ENCODE measurements at regions of chr12 and their contacts with region 1.

Region 1: GRCh38 chr12:121060149-121061001 is 21.3 kb upstream of the OASL start:
- DNase-seq: peak; percentile 80 to 91 (median 89)
- H3K4me3 ChIP-seq: peak overlapping the region; percentile 25 to 88 (median 67)
- H3K27ac ChIP-seq: peak overlapping the region; percentile 79 to 88
- H3K4me1 ChIP-seq: peaks cover 0 to 10% (median 6%) of the 10 kb centered on the region in 4 experiments
- H3K27me3 ChIP-seq: no peaks in the 10 kb centered on the region

Region 2: GRCh38 chr12:120580787-120581723 is 479.3 kb before region 1 on chr12 and contains the start of gene POP5:
- CTCF ChIA-PET with region 1: interaction called, 14 read pairs
- POLR2A ChIA-PET with region 1: no interaction called
- DNase-seq: peak; percentile 96 to 97 (median 97)
- H3K4me3 ChIP-seq: peak within 1 kb of the TSS; percentile 76 to 96 (median 91)
- H3K27ac ChIP-seq: peak within 1 kb of the TSS; percentile 60 to 78
- H3K4me1 ChIP-seq: peaks cover 8 to 34% (median 21%) of the 10 kb centered on the region in 4 experiments
- H3K27me3 ChIP-seq: peaks cover 0 to 23% (median 9%) of the 10 kb centered on the region in 5 experiments

Region 3: GRCh38 chr12:121079736-121080272 is 19.4 kb after region 1 on chr12:
- CTCF ChIA-PET with region 1: interaction called, 19 read pairs
- POLR2A ChIA-PET with region 1: no interaction called
- DNase-seq: no peak
- H3K4me3 ChIP-seq: no peak overlapping the region
- H3K27ac ChIP-seq: no peak overlapping the region
- H3K4me1 ChIP-seq: no peaks in the 10 kb centered on the region
- H3K27me3 ChIP-seq: no peaks in the 10 kb centered on the region

Region 4: DNA sequence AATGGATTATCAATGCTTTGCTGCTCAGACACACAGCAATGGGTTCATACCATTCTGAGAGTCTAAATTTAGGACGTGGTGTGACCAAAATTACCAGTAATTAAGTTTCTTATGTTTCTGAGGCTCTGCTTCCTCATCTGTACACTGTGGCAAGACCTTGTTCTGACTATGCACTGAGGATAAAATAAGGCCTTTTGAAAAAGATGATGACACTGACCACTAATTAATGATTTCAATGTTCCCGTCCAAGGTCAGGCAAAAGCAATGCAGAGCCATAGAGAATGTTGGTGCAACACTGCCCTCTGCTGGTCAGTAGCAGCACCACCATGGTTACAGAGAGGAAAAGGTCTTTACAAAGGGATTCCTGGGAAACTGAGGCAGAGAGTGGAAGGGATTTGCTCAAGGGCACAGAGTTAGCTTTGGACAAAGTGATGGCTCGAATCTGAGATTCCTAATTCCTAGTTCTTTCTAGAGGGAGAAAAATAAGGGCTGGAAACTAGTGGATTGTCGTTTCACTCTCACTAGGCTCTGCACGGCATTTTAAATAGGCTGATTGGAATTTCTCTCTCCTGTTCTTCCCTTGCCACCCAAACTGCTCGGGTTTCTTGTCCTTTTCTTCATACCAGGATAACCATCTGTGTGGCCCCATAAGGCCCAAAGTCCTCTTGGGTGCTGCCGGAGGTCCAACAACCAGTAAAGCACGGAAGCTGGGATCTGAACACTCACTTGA is 50.0 kb after region 1 on chr12:
- CTCF ChIA-PET with region 1: interaction called, 64 read pairs
- POLR2A ChIA-PET with region 1: no interaction called
- DNase-seq: peak; percentile 63 to 76 (median 70)
- H3K4me3 ChIP-seq: no peak overlapping the region
- H3K27ac ChIP-seq: no peak overlapping the region
- H3K4me1 ChIP-seq: peaks cover 0 to 15% (median 12%) of the 10 kb centered on the region in 4 experiments
- H3K27me3 ChIP-seq: no peaks in the 10 kb centered on the region

Region 5: GRCh38 chr12:121240484-121241101 is 180.2 kb after region 1 on chr12:
- CTCF ChIA-PET with region 1: interaction called, 12 read pairs
- POLR2A ChIA-PET with region 1: no interaction called
- DNase-seq: peak; percentile 89 to 96 (median 92)
- H3K4me3 ChIP-seq: peak overlapping the region in 4 of 7 experiments; percentile 5 to 54 (median 30)
- H3K27ac ChIP-seq: peak overlapping the region; percentile 72 to 79
- H3K4me1 ChIP-seq: peaks cover 17 to 41% (median 37%) of the 10 kb centered on the region in 4 experiments
- H3K27me3 ChIP-seq: no peaks in the 10 kb centered on the region

Measured in common myeloid progenitor, CD34-positive (primary cell).